Vagina (tissue), 2 donors: ENCODE measurements at regions of chr11 and their contacts with region 1.

Region 1: GRCh38 chr11:77091146-77091940 is 11.3 kb upstream of the OMP start:
- DNase-seq: no peak
- H3K4me3 ChIP-seq: no peak overlapping the region
- H3K27ac ChIP-seq: no peak overlapping the region
- H3K4me1 ChIP-seq: no peaks in the 10 kb centered on the region
- H3K27me3 ChIP-seq: no peaks in the 10 kb centered on the region
- CTCF ChIP-seq: peak; percentile 93 to 99 (median 95)
- POLR2A ChIP-seq: no peak

Region 2: DNA sequence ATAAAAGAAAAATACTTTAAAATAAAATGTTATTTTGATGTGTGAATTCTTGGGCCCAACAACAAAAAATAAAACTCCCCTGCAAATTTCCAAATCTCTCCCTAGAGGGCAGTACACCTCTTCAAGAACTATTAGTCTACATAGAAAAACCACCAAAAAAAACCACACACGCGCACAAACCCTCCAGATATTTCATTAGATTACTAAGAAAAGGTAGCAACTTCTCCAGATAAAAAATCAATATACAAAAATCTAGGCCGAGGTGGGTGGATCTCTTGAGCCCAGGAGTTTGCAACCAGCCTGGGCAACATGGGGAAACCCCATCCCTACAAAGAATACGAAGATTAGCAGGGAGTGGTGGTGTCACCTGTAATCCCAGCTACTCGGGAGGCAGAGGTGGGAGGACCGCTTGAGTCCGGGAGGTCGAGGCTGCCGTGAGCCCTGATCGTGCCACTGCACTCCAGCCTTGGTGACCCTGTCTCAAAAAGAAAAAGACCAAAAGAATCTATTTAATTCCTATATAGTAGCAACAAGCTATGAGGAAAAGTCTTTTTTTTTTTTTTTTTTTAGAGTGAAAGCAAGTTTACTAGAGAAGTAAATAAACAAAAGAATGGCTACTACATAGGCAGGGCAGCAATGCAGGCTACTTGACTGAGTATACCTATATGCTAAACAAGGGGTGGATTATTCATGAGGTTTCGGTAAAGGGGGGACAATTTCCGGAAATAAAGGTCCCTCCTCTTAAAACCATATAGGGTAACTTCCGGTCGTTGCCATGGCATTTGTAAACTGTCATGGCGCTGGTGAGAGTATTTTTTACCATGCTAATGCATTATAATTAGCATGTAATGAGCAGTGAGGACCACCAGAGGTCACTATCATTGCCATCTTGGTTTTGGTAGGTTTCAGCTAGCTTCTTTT is 44.1 kb before region 1 on chr11:
- intact Hi-C with region 1: loop called (anchors 5 kb)
- DNase-seq: no peak
- H3K4me3 ChIP-seq: peak overlapping the region; percentile 23 to 29
- H3K27ac ChIP-seq: no peak overlapping the region
- H3K4me1 ChIP-seq: peaks cover 9% of the 10 kb centered on the region
- H3K27me3 ChIP-seq: no peaks in the 10 kb centered on the region
- CTCF ChIP-seq: peak; percentile 33 to 71 (median 69)
- POLR2A ChIP-seq: no peak